ENCODE measurements at regions of chr7 and their contacts with region 1.

Region 1: DNA sequence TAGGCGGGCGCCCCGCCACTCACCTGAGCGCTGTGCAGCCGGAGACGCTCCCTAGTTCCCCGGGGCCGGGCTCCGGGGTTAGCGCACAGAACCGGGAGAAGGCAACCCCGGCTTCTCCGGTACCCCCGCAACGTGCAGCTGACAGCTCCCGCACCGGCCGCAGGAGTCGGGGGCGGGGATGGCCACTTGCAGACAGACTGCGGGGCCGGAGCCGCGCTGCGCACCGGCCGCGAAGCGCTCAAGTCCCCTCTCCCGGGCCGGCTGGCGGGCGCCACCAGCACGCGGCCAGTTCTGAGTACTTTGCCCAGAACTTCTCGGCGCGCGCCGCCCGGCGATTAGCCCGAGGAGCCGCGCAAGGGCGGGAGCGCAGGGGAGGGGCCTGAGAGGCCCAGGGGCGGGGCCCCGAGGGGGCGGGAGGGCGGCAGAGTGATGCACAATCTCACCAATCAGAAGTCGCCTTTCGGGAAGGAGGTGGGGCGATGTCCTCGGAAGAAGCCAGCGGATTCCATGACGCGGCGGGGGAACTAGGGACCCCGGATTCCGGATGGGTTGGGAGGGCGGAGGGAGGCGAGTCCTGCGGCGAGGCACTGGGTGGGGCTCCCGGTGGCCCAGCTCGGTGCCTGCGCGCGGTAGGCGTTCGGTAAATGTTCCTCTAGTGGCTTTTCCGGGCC is at the start of gene OSBPL3:
- DNase-seq: peak; percentile 96
- ATAC-seq: peak; percentile 90
- H3K4me3 Mint-ChIP-seq: peak within 1 kb of the TSS; percentile 83
- H3K27ac Mint-ChIP-seq: peak within 1 kb of the TSS; percentile 89
- H3K4me1 Mint-ChIP-seq: peaks cover 53% of the 10 kb centered on the region
- H3K27me3 Mint-ChIP-seq: no peaks in the 10 kb centered on the region
- CTCF ChIP-seq: peak; percentile 7
- total RNA-seq, gene OSBPL3: 44.6 to 45.7 TPM

Region 2: GRCh38 chr7:24690251-24690650 is 289.7 kb before region 1 on chr7:
- CTCF ChIA-PET with region 1: no interaction called
- POLR2A ChIA-PET with region 1: no interaction called
- intact Hi-C with region 1: no loop called
- DNase-seq: no peak
- ATAC-seq: no peak
- H3K4me3 Mint-ChIP-seq: no peak overlapping the region
- H3K27ac Mint-ChIP-seq: no peak overlapping the region
- H3K4me1 Mint-ChIP-seq: no peaks in the 10 kb centered on the region
- H3K27me3 Mint-ChIP-seq: no peaks in the 10 kb centered on the region
- CTCF ChIP-seq: no peak

Region 3: GRCh38 chr7:24889611-24890010 is 90.4 kb before region 1 on chr7:
- CTCF ChIA-PET with region 1: interaction called, 10 read pairs
- POLR2A ChIA-PET with region 1: no interaction called
- intact Hi-C with region 1: no loop called
- DNase-seq: no peak
- ATAC-seq: no peak
- H3K4me3 Mint-ChIP-seq: no peak overlapping the region
- H3K27ac Mint-ChIP-seq: no peak overlapping the region
- H3K4me1 Mint-ChIP-seq: peaks cover 48% of the 10 kb centered on the region
- H3K27me3 Mint-ChIP-seq: no peaks in the 10 kb centered on the region
- CTCF ChIP-seq: no peak

Region 4: DNA sequence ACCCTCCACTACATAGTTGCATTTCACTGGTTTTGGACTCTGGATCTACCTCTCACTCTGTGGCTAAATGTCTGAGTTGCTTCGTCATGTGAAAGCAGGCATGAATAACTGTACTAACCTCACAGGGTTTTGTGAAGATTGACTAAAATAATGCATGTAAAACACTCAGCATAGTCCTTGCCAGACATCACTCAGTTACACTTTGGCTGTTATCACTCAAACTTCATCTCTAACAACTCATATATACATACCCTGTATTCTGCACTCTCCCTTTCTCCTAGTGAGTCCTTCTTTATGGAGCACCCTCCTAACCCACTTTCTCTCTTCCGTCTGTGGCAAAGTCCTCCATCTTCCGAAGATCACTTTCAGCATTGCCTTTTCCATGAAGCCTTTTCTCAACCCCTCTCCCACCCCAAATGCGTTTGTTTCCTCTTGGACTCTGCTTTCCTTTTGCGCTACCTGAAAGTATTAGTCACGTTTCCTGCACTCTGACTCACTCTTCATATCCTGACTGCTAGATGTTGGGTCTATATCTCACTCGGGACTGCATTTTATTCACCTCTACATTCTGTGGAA is 72.6 kb before region 1 on chr7:
- CTCF ChIA-PET with region 1: interaction called, 8 read pairs
- POLR2A ChIA-PET with region 1: interaction called, 21 read pairs
- intact Hi-C with region 1: no loop called
- DNase-seq: peak; percentile 43
- ATAC-seq: peak; percentile 73
- H3K4me3 Mint-ChIP-seq: no peak overlapping the region
- H3K27ac Mint-ChIP-seq: no peak overlapping the region
- H3K4me1 Mint-ChIP-seq: peaks cover 51% of the 10 kb centered on the region
- H3K27me3 Mint-ChIP-seq: no peaks in the 10 kb centered on the region
- CTCF ChIP-seq: no peak

Region 5: DNA sequence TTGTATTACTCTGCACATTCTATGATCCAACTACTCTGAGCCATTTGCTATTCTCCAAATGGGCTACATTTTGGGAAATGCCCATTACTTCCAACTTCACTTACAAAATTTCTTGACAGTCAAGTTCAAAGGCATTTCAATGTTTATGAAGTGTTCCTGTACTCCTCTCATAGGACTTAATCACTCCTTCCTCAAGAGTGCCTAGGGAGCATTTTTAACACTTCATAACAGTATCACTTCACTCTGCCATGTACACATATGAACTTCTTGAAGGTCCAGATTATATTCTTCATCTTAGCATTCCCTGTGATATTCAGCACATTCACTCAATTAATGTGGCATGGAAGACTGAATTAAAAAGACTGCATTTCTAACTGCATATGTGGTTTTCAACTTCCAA is 21.6 kb before region 1 on chr7:
- CTCF ChIA-PET with region 1: no interaction called
- POLR2A ChIA-PET with region 1: no interaction called
- intact Hi-C with region 1: no loop called
- DNase-seq: no peak
- ATAC-seq: no peak
- H3K4me3 Mint-ChIP-seq: no peak overlapping the region
- H3K27ac Mint-ChIP-seq: no peak overlapping the region
- H3K4me1 Mint-ChIP-seq: peaks cover 66% of the 10 kb centered on the region
- H3K27me3 Mint-ChIP-seq: no peaks in the 10 kb centered on the region
- CTCF ChIP-seq: no peak

Region 6: GRCh38 chr7:25069900-25070443 is 90.0 kb after region 1 on chr7:
- CTCF ChIA-PET with region 1: interaction called, 19 read pairs
- POLR2A ChIA-PET with region 1: interaction called, 3 read pairs
- intact Hi-C with region 1: loop called (anchors 5 kb)
- DNase-seq: peak; percentile 54
- ATAC-seq: peak; percentile 71
- H3K4me3 Mint-ChIP-seq: no peak overlapping the region
- H3K27ac Mint-ChIP-seq: no peak overlapping the region
- H3K4me1 Mint-ChIP-seq: peaks cover 9% of the 10 kb centered on the region
- H3K27me3 Mint-ChIP-seq: peaks cover 2% of the 10 kb centered on the region
- CTCF ChIP-seq: peak; percentile 96

Region 7: GRCh38 chr7:25125137-25125946 is 145.3 kb after region 1 on chr7 and contains the start of gene CYCS:
- CTCF ChIA-PET with region 1: no interaction called
- POLR2A ChIA-PET with region 1: interaction called, 11 read pairs
- intact Hi-C with region 1: no loop called
- DNase-seq: peak; percentile 100
- ATAC-seq: peak; percentile 95
- H3K4me3 Mint-ChIP-seq: peak within 1 kb of the TSS; percentile 97
- H3K27ac Mint-ChIP-seq: peak within 1 kb of the TSS; percentile 98
- H3K4me1 Mint-ChIP-seq: peaks cover 27% of the 10 kb centered on the region
- H3K27me3 Mint-ChIP-seq: no peaks in the 10 kb centered on the region
- CTCF ChIP-seq: no peak
- total RNA-seq, gene CYCS: 266 TPM

Measured in activated CD8-positive, alpha-beta T cell treated with anti-CD3 and anti-CD28 coated beads for 36 hours (primary cell).